Calu3 (cell line): ENCODE measurements at regions of chr21 and their contacts with region 1.

Region 1: GRCh38 chr21:28745131-28746016 is 247.3 kb downstream of the LTN1 start:
- DNase-seq: peak; percentile 68
- H3K4me3 Mint-ChIP-seq: no peak overlapping the region
- H3K27ac Mint-ChIP-seq: no peak overlapping the region
- H3K4me1 Mint-ChIP-seq: no peaks in the 10 kb centered on the region
- H3K27me3 Mint-ChIP-seq: no peaks in the 10 kb centered on the region
- CTCF ChIP-seq: peak; percentile 54

Region 2: GRCh38 chr21:26850108-26850643 is 1895.2 kb before region 1 on chr21:
- CTCF ChIA-PET with region 1: interaction called, 3 read pairs
- intact Hi-C with region 1: loop called (anchors 10 kb)
- DNase-seq: no peak
- H3K4me3 Mint-ChIP-seq: no peak overlapping the region
- H3K27ac Mint-ChIP-seq: no peak overlapping the region
- H3K4me1 Mint-ChIP-seq: peaks cover 16% of the 10 kb centered on the region
- H3K27me3 Mint-ChIP-seq: peaks cover 19% of the 10 kb centered on the region
- CTCF ChIP-seq: peak; percentile 49

Region 3: GRCh38 chr21:27759091-27759659 is 986.2 kb before region 1 on chr21:
- CTCF ChIA-PET with region 1: interaction called, 14 read pairs
- intact Hi-C with region 1: loop called (anchors 2 kb)
- DNase-seq: peak; percentile 43
- H3K4me3 Mint-ChIP-seq: no peak overlapping the region
- H3K27ac Mint-ChIP-seq: no peak overlapping the region
- H3K4me1 Mint-ChIP-seq: peaks cover 26% of the 10 kb centered on the region
- H3K27me3 Mint-ChIP-seq: no peaks in the 10 kb centered on the region
- CTCF ChIP-seq: peak; percentile 62

Region 4: GRCh38 chr21:28336314-28336713 is 409.1 kb before region 1 on chr21:
- CTCF ChIA-PET with region 1: interaction called, 13 read pairs
- intact Hi-C with region 1: loop called (anchors 1 kb)
- DNase-seq: peak; percentile 9
- H3K4me3 Mint-ChIP-seq: no peak overlapping the region
- H3K27ac Mint-ChIP-seq: no peak overlapping the region
- H3K4me1 Mint-ChIP-seq: peaks cover 14% of the 10 kb centered on the region
- H3K27me3 Mint-ChIP-seq: no peaks in the 10 kb centered on the region
- CTCF ChIP-seq: peak; percentile 22

Region 5: GRCh38 chr21:28943631-28944030 is 198.3 kb after region 1 on chr21:
- CTCF ChIA-PET with region 1: interaction called, 3 read pairs
- intact Hi-C with region 1: loop called (anchors 2 kb)
- DNase-seq: no peak
- H3K4me3 Mint-ChIP-seq: no peak overlapping the region
- H3K27ac Mint-ChIP-seq: no peak overlapping the region
- H3K4me1 Mint-ChIP-seq: no peaks in the 10 kb centered on the region
- H3K27me3 Mint-ChIP-seq: no peaks in the 10 kb centered on the region
- CTCF ChIP-seq: no peak

Region 6: DNA sequence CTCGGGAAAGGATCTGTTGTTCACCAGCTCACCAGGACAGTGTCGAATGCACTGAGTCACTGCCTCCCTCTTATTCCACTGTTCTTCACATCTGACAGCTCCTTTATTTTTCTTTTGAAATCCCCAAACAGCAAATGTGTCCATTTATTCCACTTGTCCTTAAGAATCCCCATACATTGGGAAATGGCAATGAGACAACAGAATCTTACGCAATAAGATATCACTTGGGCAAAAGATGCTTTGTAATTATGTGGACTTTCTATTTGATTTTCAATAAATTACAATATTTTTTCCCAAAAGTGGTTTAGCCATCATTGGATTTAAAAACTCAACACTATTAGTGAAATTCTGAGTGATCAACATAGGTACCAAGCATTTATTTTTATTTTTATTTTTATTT is 1893.3 kb after region 1 on chr21:
- CTCF ChIA-PET with region 1: no interaction called
- intact Hi-C with region 1: no loop called
- DNase-seq: no peak
- H3K4me3 Mint-ChIP-seq: no peak overlapping the region
- H3K27ac Mint-ChIP-seq: no peak overlapping the region
- H3K4me1 Mint-ChIP-seq: no peaks in the 10 kb centered on the region
- H3K27me3 Mint-ChIP-seq: no peaks in the 10 kb centered on the region
- CTCF ChIP-seq: no peak